ENCODE measurements at regions of chr7 and their contacts with region 1.

Region 1: GRCh38 chr7:98300595-98301372 is 19.3 kb downstream of the BRI3 start:
- DNase-seq: no peak
- H3K4me3 ChIP-seq: no peak overlapping the region
- H3K27ac ChIP-seq: no peak overlapping the region
- H3K4me1 ChIP-seq: no peaks in the 10 kb centered on the region
- H3K27me3 ChIP-seq: no peaks in the 10 kb centered on the region

Region 2: DNA sequence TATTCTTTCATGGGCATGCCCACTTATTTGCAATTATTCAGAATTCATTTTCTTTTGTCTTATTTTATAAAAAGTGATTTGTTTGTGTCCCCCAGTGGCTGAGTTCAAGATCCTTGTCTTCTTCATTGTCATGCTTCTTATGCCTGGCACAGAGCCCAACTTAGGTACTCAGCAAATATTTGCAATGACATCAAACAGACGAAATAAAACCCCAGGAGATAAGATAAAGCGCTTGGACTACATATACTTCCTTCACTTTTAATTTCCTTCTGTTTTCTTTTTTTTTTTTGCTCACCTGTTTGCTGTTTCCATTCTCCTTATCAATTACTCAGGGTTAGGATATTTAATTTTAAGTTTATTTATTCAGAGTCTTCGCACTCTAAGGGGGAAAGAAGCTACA is 958.3 kb before region 1 on chr7:
- in situ Hi-C with region 1: no loop called
- DNase-seq: no peak
- H3K4me3 ChIP-seq: no peak overlapping the region
- H3K27ac ChIP-seq: no peak overlapping the region
- H3K4me1 ChIP-seq: no peaks in the 10 kb centered on the region
- H3K27me3 ChIP-seq: no peaks in the 10 kb centered on the region

Region 3: GRCh38 chr7:98162758-98163157 is 138.0 kb before region 1 on chr7:
- in situ Hi-C with region 1: no loop called
- DNase-seq: no peak
- H3K4me3 ChIP-seq: no peak overlapping the region
- H3K27ac ChIP-seq: no peak overlapping the region
- H3K4me1 ChIP-seq: no peaks in the 10 kb centered on the region
- H3K27me3 ChIP-seq: no peaks in the 10 kb centered on the region

Region 4: DNA sequence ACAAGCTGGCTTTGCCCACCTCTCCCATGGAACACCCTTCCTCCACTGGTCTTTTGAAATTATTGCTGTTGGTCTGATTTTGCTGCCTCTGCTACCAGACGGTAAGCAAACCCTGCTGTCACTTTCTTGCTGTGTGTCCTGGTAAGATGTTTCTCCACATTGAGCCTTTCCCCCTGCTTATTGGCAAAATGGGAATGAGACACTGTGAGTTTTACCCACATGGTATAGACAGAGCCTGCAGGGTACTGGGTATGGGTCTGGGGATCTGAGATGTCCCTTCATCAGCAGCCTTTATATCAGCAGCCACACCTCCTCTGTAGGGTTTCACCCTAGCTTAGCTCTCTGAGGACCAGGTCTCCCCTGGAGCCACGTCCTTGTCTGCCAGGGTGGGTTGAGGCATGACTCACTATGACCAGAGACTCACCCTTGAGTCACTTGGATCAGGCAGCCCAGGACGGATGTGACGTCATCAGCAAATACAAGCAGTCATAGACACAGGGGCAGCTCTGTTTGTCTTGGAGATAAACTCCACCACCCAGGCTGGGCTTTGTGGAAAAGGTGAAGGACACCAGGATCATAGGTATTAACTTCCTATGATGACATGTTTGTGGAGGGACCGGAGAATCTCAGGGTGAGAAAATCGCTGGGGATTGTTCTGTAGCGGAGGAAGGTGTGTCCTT is 118.0 kb after region 1 on chr7:
- in situ Hi-C with region 1: loop called (anchors 10 kb)
- DNase-seq: peak; percentile 99
- H3K4me3 ChIP-seq: no peak overlapping the region
- H3K27ac ChIP-seq: peak overlapping the region; percentile 91
- H3K4me1 ChIP-seq: peaks cover 24% of the 10 kb centered on the region
- H3K27me3 ChIP-seq: no peaks in the 10 kb centered on the region

Measured in GM23248 (cell line).